ENCODE measurements at regions of chr2 and their contacts with region 1.

Region 1: GRCh38 chr2:208064220-208064961 is 39.1 kb upstream of the PLEKHM3 start:
- DNase-seq: no peak
- ATAC-seq: no peak
- H3K4me3 Mint-ChIP-seq: no peak overlapping the region
- H3K27ac Mint-ChIP-seq: no peak overlapping the region
- H3K4me1 Mint-ChIP-seq: no peaks in the 10 kb centered on the region
- H3K27me3 Mint-ChIP-seq: no peaks in the 10 kb centered on the region; the same call in 1 of the 2 replicates
- CTCF ChIP-seq: no peak

Region 2: GRCh38 chr2:207252979-207253645 is 811.3 kb before region 1 on chr2:
- CTCF ChIA-PET with region 1: no interaction called
- POLR2A ChIA-PET with region 1: interaction called, 10 read pairs
- DNase-seq: peak; percentile 20
- ATAC-seq: peak; percentile 43; the same call in 1 of the 2 replicates
- H3K4me3 Mint-ChIP-seq: no peak overlapping the region
- H3K27ac Mint-ChIP-seq: no peak overlapping the region
- H3K4me1 Mint-ChIP-seq: peaks cover 28% of the 10 kb centered on the region
- H3K27me3 Mint-ChIP-seq: no peaks in the 10 kb centered on the region; the same call in 1 of the 2 replicates
- CTCF ChIP-seq: no peak